H1 (cell line): ENCODE measurements at regions of chr7 and their contacts with region 1.

Region 1: GRCh38 chr7:44847508-44847920 is 373 bp downstream of the H2AZ2 start:
- DNase-seq: peak in 1 of 2 experiments; percentile 33
- H3K4me3 ChIP-seq: peak overlapping the region; percentile 64 to 93 (median 85)
- H3K27ac ChIP-seq: peak overlapping the region; percentile 86
- H3K4me1 ChIP-seq: peaks cover 0 to 3% (median 0%) of the 10 kb centered on the region in 4 experiments; a peak in 2 of 7 replicates
- H3K27me3 ChIP-seq: no peaks in the 10 kb centered on the region
- CTCF ChIP-seq: peak; percentile 68 to 75 (median 70)
- EP300 ChIP-seq: no peak
- POLR2A ChIP-seq: no peak
- RAD21 ChIP-seq: peak; percentile 64 to 69

Region 2: GRCh38 chr7:44678471-44679179 is 168.9 kb before region 1 on chr7:
- CTCF ChIA-PET with region 1: no interaction called
- POLR2A ChIA-PET with region 1: no interaction called
- DNase-seq: no peak
- H3K4me3 ChIP-seq: no peak overlapping the region
- H3K27ac ChIP-seq: peak overlapping the region; percentile 36; the same call in 1 of the 2 replicates
- H3K4me1 ChIP-seq: no peaks in the 10 kb centered on the region
- H3K27me3 ChIP-seq: no peaks in the 10 kb centered on the region
- CTCF ChIP-seq: no peak
- EP300 ChIP-seq: no peak
- POLR2A ChIP-seq: no peak
- RAD21 ChIP-seq: no peak

Region 3: DNA sequence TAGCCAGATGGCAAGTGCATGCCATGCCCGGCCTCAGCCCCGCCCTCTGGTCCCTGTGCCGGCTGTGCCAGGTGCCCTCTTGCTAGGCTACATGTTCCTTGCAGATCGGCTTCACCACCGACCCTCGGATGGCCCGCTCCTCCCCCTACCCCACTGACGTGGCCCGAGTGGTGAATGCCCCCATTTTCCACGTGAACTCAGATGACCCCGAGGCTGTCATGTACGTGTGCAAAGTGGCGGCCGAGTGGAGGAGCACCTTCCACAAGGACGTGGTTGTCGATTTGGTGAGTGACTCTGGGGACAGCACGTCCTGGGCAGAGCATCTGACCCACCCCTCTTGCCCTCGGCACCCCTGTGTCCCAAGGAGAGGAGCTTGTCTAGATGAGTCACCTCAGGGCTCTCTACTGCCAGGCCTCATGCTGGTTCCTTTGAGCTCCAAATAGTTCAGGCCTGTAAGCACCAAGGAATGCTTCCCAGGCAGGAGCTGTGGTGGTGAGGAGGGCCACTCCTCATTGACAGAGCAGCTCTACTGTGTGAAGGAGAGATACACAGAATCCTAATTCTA is 153.7 kb before region 1 on chr7:
- CTCF ChIA-PET with region 1: no interaction called
- POLR2A ChIA-PET with region 1: no interaction called
- DNase-seq: no peak
- H3K4me3 ChIP-seq: no peak overlapping the region
- H3K27ac ChIP-seq: 0 out of 2 replicates have a peak overlapping the region, but pooled peaks have one; percentile 36
- H3K4me1 ChIP-seq: no peaks in the 10 kb centered on the region
- H3K27me3 ChIP-seq: no peaks in the 10 kb centered on the region
- CTCF ChIP-seq: no peak
- EP300 ChIP-seq: no peak
- POLR2A ChIP-seq: no peak
- RAD21 ChIP-seq: no peak

Region 4: GRCh38 chr7:44748045-44748947 is 99.2 kb before region 1 on chr7 and contains the start of gene ZMIZ2:
- CTCF ChIA-PET with region 1: interaction called, 3 read pairs
- POLR2A ChIA-PET with region 1: interaction called, 12 read pairs
- DNase-seq: peak; percentile 38 to 98
- H3K4me3 ChIP-seq: peak within 1 kb of the TSS; percentile 63 to 98 (median 91)
- H3K27ac ChIP-seq: peak within 1 kb of the TSS; percentile 83; the same call in 1 of the 2 replicates
- H3K4me1 ChIP-seq: peaks cover 0 to 26% (median 11%) of the 10 kb centered on the region in 4 experiments; a peak in 6 of 7 replicates
- H3K27me3 ChIP-seq: no peaks in the 10 kb centered on the region
- CTCF ChIP-seq: no peak; a peak in 1 of 4 replicates
- EP300 ChIP-seq: 0 out of 3 replicates have a peak, but pooled peaks of 1 of the 2 experiments have one; percentile 27
- POLR2A ChIP-seq: peak; percentile 0 to 33; a peak in 2 of 3 replicates
- RAD21 ChIP-seq: no peak
- total RNA-seq, gene ZMIZ2: 66.4 and 72.2 TPM in 2 replicates

Region 5: DNA sequence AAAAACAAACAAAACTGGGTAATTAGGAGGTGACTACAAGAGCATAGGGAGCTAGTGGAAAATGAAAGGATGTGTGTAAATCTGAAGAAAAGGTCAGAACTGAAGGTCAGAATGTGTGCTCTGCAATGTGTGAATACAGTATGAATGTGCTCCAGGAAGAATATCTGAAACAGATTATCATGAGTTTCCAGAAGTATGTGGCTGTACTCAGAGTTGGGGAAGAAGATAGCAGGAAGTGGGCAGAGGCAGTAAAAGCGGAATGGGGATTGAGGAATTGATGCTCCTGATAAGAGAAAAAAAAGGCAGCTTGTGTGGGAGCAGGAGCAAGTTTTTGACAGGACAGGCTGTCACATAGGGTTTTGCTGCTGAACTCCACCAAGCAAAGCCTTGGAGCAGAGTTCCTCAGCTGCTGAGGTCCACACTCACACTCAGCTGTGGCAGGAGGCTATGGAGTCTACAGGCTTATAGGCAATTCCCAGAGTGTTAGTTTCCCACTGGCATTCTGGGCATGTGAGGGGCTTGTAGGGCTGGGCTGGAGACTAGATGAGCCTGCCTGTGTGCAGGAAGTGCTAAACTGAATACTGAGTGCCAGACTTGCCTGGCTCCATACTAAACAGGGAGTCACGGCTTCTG is 22.5 kb before region 1 on chr7:
- CTCF ChIA-PET with region 1: interaction called, 3 read pairs
- POLR2A ChIA-PET with region 1: interaction called, 17 read pairs
- DNase-seq: no peak
- H3K4me3 ChIP-seq: no peak overlapping the region
- H3K27ac ChIP-seq: no peak overlapping the region
- H3K4me1 ChIP-seq: no peaks in the 10 kb centered on the region
- H3K27me3 ChIP-seq: no peaks in the 10 kb centered on the region
- CTCF ChIP-seq: no peak
- EP300 ChIP-seq: no peak
- POLR2A ChIP-seq: 0 out of 3 replicates have a peak, but pooled peaks of 1 of the 2 experiments have one; percentile 15
- RAD21 ChIP-seq: no peak

Region 6: DNA sequence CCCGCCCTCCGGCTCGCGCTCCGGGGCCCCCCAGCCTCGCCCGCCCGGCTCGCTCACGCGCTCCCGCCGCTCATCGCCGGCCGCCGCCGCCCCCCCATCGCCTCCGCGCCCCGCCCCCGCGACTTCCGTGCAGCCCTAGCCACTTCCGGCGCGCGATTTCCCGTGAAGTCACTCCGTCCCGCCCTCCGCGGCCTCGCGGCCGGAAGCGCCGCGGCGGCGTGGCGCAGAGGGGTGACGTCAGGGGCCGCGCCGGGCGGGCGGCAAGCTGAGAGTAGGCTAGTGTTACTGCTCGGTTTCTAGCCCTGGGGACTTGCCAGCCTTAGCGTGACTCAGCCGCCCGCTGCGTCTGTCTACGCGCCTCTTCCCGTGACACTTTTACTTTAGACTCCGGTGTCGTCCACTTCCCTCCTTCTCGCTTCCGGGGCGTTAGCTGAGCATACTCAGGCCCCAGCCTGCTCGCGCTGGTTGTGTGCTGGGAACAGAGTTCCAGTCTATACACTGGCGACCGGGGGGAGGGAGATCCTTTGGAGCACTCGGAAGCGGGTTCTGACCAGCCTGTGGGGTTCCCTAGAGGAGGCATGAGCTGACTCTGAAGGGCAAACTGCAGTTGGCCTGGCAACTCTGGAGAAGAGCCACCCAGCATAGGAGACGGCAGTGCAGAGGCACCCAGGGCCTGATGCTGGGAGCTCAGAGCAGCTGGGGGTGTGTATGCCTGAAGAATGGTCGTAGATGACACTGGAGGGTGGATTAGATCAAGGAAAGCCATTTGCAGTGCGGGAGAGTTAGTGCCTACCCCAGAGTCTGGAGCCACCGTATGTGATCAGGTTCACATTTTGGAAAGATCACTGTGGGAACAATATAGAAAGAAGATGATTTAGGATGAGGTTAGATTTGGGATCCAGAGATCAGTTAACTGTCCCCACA is 38.1 kb after region 1 on chr7 and contains the start of gene PURB:
- CTCF ChIA-PET with region 1: interaction called, 4 read pairs
- POLR2A ChIA-PET with region 1: interaction called, 53 read pairs
- DNase-seq: peak; percentile 70 to 94
- H3K4me3 ChIP-seq: peak within 1 kb of the TSS; percentile 67 to 94 (median 86)
- H3K27ac ChIP-seq: peak within 1 kb of the TSS; percentile 92
- H3K4me1 ChIP-seq: peaks cover 1 to 11% (median 5%) of the 10 kb centered on the region in 4 experiments; a peak in 5 of 7 replicates
- H3K27me3 ChIP-seq: no peaks in the 10 kb centered on the region
- CTCF ChIP-seq: no peak
- EP300 ChIP-seq: peak in 1 of 2 experiments; percentile 75; a peak in 1 of 3 replicates
- POLR2A ChIP-seq: peak; percentile 87
- RAD21 ChIP-seq: no peak; a peak in 1 of 4 replicates
- total RNA-seq, gene PURB: 21.9 and 22.7 TPM in 2 replicates

Region 7: DNA sequence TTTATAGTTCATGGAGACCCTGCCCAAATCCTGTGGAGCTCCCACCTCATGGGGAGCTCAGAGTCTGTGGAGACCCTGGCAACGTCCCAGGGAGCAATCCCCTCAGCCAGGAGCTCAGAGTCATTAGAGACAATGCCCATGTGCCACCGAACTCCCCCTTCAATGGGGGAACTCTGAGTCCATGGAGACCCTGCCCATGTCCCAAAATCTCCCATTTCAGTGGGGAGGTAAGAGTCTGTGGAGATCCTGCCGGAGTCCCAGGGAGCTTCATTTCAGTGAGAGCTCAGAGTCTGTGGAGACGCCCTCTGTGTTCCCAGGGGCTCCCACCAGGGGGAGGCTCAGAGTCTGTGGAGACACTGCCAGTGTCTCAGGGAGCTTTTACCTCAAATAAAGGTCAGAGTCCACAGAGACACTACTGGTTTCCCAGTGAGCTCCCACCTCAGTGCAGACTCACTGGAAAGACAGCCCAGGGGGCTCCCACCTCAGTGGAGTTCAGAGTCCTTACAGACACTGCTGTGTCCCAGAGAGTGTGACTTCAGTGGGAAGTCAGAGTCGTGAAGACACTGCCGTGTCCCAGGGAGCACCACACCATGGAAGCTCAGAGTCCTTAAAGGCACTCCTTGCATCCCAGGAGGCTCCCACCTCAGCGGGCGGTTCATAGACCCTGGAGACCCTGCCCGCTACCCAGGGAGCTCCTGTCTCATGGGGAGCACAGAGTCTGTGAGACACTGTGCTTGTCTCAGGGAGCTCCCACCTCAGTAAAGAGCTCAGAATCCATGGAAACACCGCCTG is 126.3 kb after region 1 on chr7:
- CTCF ChIA-PET with region 1: interaction called, 3 read pairs
- POLR2A ChIA-PET with region 1: interaction called, 14 read pairs
- DNase-seq: no peak
- H3K4me3 ChIP-seq: no peak overlapping the region
- H3K27ac ChIP-seq: no peak overlapping the region
- H3K4me1 ChIP-seq: no peaks in the 10 kb centered on the region; a peak in 1 of 7 replicates
- H3K27me3 ChIP-seq: no peaks in the 10 kb centered on the region
- CTCF ChIP-seq: peak in 2 of 3 experiments; percentile 41 to 42; a peak in 3 of 4 replicates
- EP300 ChIP-seq: no peak
- POLR2A ChIP-seq: no peak
- RAD21 ChIP-seq: peak; percentile 37 to 47